B cell (primary cell): ENCODE measurements at regions of chr12 and their contacts with region 1.

Region 1: GRCh38 chr12:32455607-32456071 is 56.3 kb downstream of the FGD4 start:
- DNase-seq: peak; percentile 74
- ATAC-seq: peak; percentile 45
- H3K4me3 ChIP-seq: peak overlapping the region in 3 of 5 experiments; percentile 21 to 42 (median 31)
- H3K4me3 Mint-ChIP-seq: peak overlapping the region; percentile 34
- H3K27ac ChIP-seq: peak overlapping the region in 1 of 2 donors; percentile 38
- H3K27ac Mint-ChIP-seq: no peak overlapping the region
- H3K4me1 ChIP-seq: peaks cover 0 to 4% of the 10 kb centered on the region in 2 donors
- H3K4me1 Mint-ChIP-seq: peaks cover 15% of the 10 kb centered on the region
- H3K27me3 ChIP-seq: no peaks in the 10 kb centered on the region
- H3K27me3 Mint-ChIP-seq: no peaks in the 10 kb centered on the region
- CTCF ChIP-seq: peak; percentile 84

Region 2: GRCh38 chr12:30695199-30696103 is 1760.2 kb before region 1 on chr12 and contains the start of gene IPO8:
- CTCF ChIA-PET with region 1: no interaction called
- POLR2A ChIA-PET with region 1: no interaction called
- intact Hi-C with region 1: loop called (anchors 10 kb)
- DNase-seq: peak; percentile 90
- ATAC-seq: peak; percentile 92
- H3K4me3 ChIP-seq: peak within 1 kb of the TSS; percentile 79 to 95 (median 89)
- H3K4me3 Mint-ChIP-seq: peak within 1 kb of the TSS; percentile 97
- H3K27ac ChIP-seq: peak within 1 kb of the TSS; percentile 68 to 88
- H3K27ac Mint-ChIP-seq: peak within 1 kb of the TSS; percentile 97
- H3K4me1 ChIP-seq: peaks cover 27% of the 10 kb centered on the region in 2 donors
- H3K4me1 Mint-ChIP-seq: peaks cover 42% of the 10 kb centered on the region
- H3K27me3 ChIP-seq: no peaks in the 10 kb centered on the region
- H3K27me3 Mint-ChIP-seq: no peaks in the 10 kb centered on the region
- CTCF ChIP-seq: peak; percentile 55
- total RNA-seq, gene IPO8: 58.1 and 60.2 TPM in 2 replicates

Region 3: DNA sequence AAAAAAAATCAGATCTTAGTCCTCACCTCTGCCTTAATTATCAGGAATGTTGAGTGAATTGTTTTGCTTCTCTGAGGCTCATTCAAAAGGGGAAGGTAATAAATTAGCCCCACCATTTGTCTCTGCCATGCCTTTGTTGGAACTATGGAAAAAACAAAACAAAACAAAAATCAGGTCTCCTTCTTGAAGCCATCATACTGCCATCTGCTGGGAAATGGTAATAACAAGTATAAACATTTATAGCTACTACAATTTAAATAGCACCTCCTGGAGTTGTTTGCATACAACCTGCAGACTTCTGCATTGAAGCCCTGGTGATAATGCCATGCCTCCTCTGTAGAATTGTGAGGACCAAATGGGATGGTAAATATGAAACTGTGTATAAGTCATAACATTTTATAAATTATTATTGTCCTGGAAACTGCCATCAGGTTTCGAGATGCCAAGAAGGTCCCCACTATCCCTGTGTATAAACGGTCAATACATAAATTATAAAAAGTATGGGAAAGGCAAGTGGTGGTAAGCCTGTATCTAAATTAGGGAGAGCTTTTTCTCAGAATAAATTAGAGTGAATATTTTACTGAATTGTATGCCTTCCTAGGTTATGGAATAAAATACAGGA is 143.5 kb before region 1 on chr12:
- CTCF ChIA-PET with region 1: no interaction called
- POLR2A ChIA-PET with region 1: no interaction called
- intact Hi-C with region 1: no loop called
- DNase-seq: peak; percentile 67
- ATAC-seq: peak; percentile 58
- H3K4me3 ChIP-seq: no peak overlapping the region
- H3K4me3 Mint-ChIP-seq: no peak overlapping the region
- H3K27ac ChIP-seq: no peak overlapping the region
- H3K27ac Mint-ChIP-seq: peak overlapping the region; percentile 86
- H3K4me1 ChIP-seq: peaks cover 0 to 6% of the 10 kb centered on the region in 2 donors
- H3K4me1 Mint-ChIP-seq: peaks cover 8% of the 10 kb centered on the region
- H3K27me3 ChIP-seq: no peaks in the 10 kb centered on the region
- H3K27me3 Mint-ChIP-seq: no peaks in the 10 kb centered on the region
- CTCF ChIP-seq: peak; percentile 76

Region 4: GRCh38 chr12:32522331-32523221 is 66.9 kb after region 1 on chr12:
- CTCF ChIA-PET with region 1: interaction called, 4 read pairs
- POLR2A ChIA-PET with region 1: no interaction called
- intact Hi-C with region 1: loop called (anchors 5 kb)
- DNase-seq: peak; percentile 39
- ATAC-seq: peak; percentile 49
- H3K4me3 ChIP-seq: no peak overlapping the region
- H3K4me3 Mint-ChIP-seq: peak overlapping the region; percentile 40
- H3K27ac ChIP-seq: peak overlapping the region; percentile 7 to 74
- H3K27ac Mint-ChIP-seq: peak overlapping the region; percentile 60
- H3K4me1 ChIP-seq: peaks cover 23% of the 10 kb centered on the region in 2 donors
- H3K4me1 Mint-ChIP-seq: peaks cover 25% of the 10 kb centered on the region
- H3K27me3 ChIP-seq: no peaks in the 10 kb centered on the region
- H3K27me3 Mint-ChIP-seq: no peaks in the 10 kb centered on the region
- CTCF ChIP-seq: no peak

Region 5: GRCh38 chr12:32708926-32709325 is 253.3 kb after region 1 on chr12:
- CTCF ChIA-PET with region 1: interaction called, 11 read pairs
- POLR2A ChIA-PET with region 1: no interaction called
- intact Hi-C with region 1: no loop called
- DNase-seq: no peak
- ATAC-seq: no peak
- H3K4me3 ChIP-seq: no peak overlapping the region
- H3K4me3 Mint-ChIP-seq: no peak overlapping the region
- H3K27ac ChIP-seq: no peak overlapping the region
- H3K27ac Mint-ChIP-seq: no peak overlapping the region
- H3K4me1 ChIP-seq: no peaks in the 10 kb centered on the region
- H3K4me1 Mint-ChIP-seq: no peaks in the 10 kb centered on the region
- H3K27me3 ChIP-seq: no peaks in the 10 kb centered on the region
- H3K27me3 Mint-ChIP-seq: no peaks in the 10 kb centered on the region
- CTCF ChIP-seq: no peak

Region 6: DNA sequence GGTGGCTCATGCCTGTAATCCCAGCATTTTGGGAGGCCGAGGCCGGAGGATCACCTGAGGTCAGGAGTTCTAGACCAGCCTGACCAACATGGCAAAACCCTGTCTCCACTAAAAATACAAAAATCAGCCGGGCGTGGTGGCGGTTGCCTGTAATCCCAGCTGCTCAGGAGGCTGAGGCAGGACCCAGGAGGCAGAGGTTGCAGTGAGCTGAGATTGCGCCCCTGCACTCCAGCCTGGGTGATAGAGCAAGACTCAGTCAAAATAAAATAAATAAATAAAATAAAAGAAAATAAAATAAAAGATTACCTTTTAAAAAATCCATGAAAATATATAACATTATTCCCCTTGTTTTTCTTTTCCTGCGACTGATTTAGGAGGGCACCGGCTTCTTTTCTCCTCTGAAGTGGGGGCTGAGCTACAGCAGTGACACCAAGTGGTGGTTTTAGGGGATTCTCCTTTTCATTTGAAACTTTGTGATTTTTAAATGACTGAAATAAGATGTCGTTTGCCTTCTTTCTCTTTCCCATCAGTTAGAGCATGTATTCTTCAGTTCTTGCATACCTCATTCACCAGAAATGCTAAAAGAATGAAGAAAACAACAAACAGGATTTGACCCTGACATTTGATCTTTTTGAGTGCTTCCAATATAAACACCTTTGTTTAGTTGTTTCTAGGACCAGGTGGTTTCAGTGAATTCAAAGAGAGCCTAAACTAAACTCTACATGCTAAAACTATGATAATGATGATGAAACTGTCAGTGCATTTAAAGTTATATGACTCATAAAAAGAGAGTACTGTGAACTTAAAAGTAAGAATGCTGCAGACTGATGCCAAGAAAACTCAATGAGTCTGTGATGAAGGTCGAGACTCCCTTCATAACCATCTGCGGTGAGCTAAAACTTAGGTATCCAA is 463.5 kb after region 1 on chr12:
- CTCF ChIA-PET with region 1: interaction called, 5 read pairs
- POLR2A ChIA-PET with region 1: no interaction called
- intact Hi-C with region 1: loop called (anchors 5 kb)
- DNase-seq: no peak
- ATAC-seq: no peak
- H3K4me3 ChIP-seq: no peak overlapping the region
- H3K4me3 Mint-ChIP-seq: no peak overlapping the region
- H3K27ac ChIP-seq: no peak overlapping the region
- H3K27ac Mint-ChIP-seq: no peak overlapping the region
- H3K4me1 ChIP-seq: no peaks in the 10 kb centered on the region
- H3K4me1 Mint-ChIP-seq: no peaks in the 10 kb centered on the region
- H3K27me3 ChIP-seq: no peaks in the 10 kb centered on the region
- H3K27me3 Mint-ChIP-seq: peaks cover 17% of the 10 kb centered on the region
- CTCF ChIP-seq: no peak

Region 7: GRCh38 chr12:34218165-34219045 is 1762.8 kb after region 1 on chr12:
- CTCF ChIA-PET with region 1: no interaction called
- POLR2A ChIA-PET with region 1: no interaction called
- intact Hi-C with region 1: loop called (anchors 5 kb)
- DNase-seq: peak; percentile 78
- ATAC-seq: peak; percentile 57
- H3K4me3 ChIP-seq: peak overlapping the region in 4 of 5 experiments; percentile 42 to 63 (median 50)
- H3K4me3 Mint-ChIP-seq: peak overlapping the region; percentile 82
- H3K27ac ChIP-seq: no peak overlapping the region
- H3K27ac Mint-ChIP-seq: no peak overlapping the region
- H3K4me1 ChIP-seq: peaks cover 5 to 14% of the 10 kb centered on the region in 2 donors
- H3K4me1 Mint-ChIP-seq: peaks cover 9% of the 10 kb centered on the region
- H3K27me3 ChIP-seq: peaks cover 0 to 11% (median 3%) of the 10 kb centered on the region in 4 experiments
- H3K27me3 Mint-ChIP-seq: peaks cover 7% of the 10 kb centered on the region
- CTCF ChIP-seq: peak; percentile 92